Sigmoid colon (tissue), 7 donors: ENCODE measurements at regions of chr5 and their contacts with region 1.

Region 1: GRCh38 chr5:123423278-123424149 is at the start of gene CEP120:
- DNase-seq: peak; percentile 99
- H3K4me3 ChIP-seq: peak within 1 kb of the TSS; percentile 88 to 95 (median 94)
- H3K27ac ChIP-seq: peak within 1 kb of the TSS; percentile 90 to 97 (median 94)
- H3K4me1 ChIP-seq: peaks cover 0 to 26% (median 19%) of the 10 kb centered on the region in 4 donors
- H3K27me3 ChIP-seq: no peaks in the 10 kb centered on the region
- CTCF ChIP-seq: peak in 3 of 4 experiments; percentile 68 to 69 (median 68)
- EP300 ChIP-seq: no peak
- POLR2A ChIP-seq: peak; percentile 75 to 77
- total RNA-seq, gene CEP120: 18.6 to 23.5 (median 21.9) TPM

Region 2: GRCh38 chr5:123511648-123512605 is 88.4 kb after region 1 on chr5 and contains the start of gene CSNK1G3:
- intact Hi-C with region 1: loop called (anchors 1 kb)
- DNase-seq: peak; percentile 99
- H3K4me3 ChIP-seq: peak within 1 kb of the TSS; percentile 86 to 97 (median 92)
- H3K27ac ChIP-seq: peak within 1 kb of the TSS; percentile 90 to 96 (median 94)
- H3K4me1 ChIP-seq: peaks cover 0 to 23% (median 10%) of the 10 kb centered on the region in 4 donors
- H3K27me3 ChIP-seq: no peaks in the 10 kb centered on the region
- CTCF ChIP-seq: no peak
- EP300 ChIP-seq: no peak
- POLR2A ChIP-seq: peak; percentile 83 to 89
- total RNA-seq, gene CSNK1G3: 55.8 to 99.6 (median 77.2) TPM

Region 3: GRCh38 chr5:123527190-123527589 is 103.7 kb after region 1 on chr5:
- intact Hi-C with region 1: no loop called
- DNase-seq: no peak
- H3K4me3 ChIP-seq: no peak overlapping the region
- H3K27ac ChIP-seq: no peak overlapping the region
- H3K4me1 ChIP-seq: peaks cover 0 to 44% (median 24%) of the 10 kb centered on the region in 4 donors
- H3K27me3 ChIP-seq: no peaks in the 10 kb centered on the region
- CTCF ChIP-seq: no peak
- EP300 ChIP-seq: no peak
- POLR2A ChIP-seq: no peak

Region 4: DNA sequence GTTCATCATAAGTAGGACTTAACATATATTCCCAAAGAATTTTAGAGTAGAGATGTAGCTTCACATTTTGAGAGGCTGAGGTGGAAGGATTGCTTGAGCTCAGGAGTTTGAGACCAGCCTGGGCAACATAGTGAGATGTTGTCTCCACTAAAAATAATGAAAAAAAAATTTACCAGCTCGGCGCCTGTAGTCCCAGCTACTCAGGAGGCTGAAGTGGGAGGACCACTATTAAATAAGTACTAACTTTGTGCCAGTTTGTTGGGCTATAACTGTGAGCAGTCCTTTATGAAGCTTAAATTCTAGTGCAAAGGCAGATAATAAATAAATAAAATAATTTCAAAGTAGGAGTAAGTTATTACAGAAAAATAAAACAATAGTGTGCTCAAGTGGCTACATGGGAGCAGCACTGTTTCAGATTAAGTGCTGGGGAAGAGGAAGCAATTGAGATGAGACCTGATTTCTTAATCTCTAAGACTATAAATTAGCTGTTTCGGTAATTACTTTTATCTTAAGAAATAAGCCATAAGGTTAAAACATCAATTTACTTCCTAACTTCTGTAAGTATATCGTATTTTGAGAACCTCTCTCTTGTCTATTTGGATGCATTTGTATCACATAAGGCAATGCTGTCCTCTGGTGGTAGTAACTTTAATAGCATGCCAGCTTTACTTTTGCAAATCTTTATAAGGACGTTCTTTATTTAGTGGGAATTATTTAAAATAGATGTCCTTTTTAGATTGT is 187.3 kb after region 1 on chr5:
- intact Hi-C with region 1: loop called (anchors 2 kb)
- DNase-seq: no peak
- H3K4me3 ChIP-seq: no peak overlapping the region
- H3K27ac ChIP-seq: no peak overlapping the region
- H3K4me1 ChIP-seq: no peaks in the 10 kb centered on the region
- H3K27me3 ChIP-seq: no peaks in the 10 kb centered on the region
- CTCF ChIP-seq: peak; percentile 87 to 97 (median 92)
- EP300 ChIP-seq: no peak
- POLR2A ChIP-seq: no peak